Lower leg skin (tissue), 4 donors: ENCODE measurements at regions of chr13 and their contacts with region 1.

Region 1: DNA sequence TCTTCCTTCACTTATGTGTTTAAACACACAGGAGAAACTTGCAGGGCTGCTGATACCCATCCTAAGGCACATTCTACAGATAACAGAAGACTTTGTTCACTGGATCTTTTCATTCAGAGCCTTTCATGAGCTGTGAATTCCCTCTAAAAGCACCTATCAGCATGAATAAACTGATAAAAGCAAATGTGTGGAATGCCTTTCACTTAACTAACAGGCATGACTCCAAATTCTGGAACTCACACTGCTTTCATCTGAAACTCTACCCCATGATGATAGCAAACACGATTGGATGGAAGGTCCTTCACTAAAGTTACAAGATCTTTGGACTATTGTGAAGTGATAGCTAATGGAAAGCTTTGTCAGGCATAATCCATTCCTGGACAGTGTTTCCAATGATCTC is 457.3 kb downstream of the EFNB2 start:
- DNase-seq: no peak
- H3K4me3 ChIP-seq: no peak overlapping the region
- CTCF ChIP-seq: no peak
- POLR2A ChIP-seq: no peak

Region 2: DNA sequence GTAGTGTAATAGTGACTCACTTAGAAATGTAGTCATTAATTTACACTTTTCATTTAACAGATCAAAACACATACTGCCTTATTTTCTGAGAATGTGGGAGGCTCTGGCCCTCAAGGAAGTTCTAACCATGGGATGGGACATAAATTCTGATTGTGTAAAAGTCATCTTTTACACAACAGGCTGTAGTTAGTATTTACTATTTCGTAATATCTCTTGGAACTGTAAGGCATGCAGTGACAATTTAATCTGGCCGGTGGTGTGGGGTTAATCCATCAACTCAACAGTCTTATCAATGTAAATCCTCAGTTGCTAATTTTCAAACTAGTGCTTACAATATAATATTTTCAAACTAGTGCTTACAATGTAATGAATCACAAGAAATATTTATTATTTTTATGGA is 1141.9 kb before region 1 on chr13:
- intact Hi-C with region 1: loop called (anchors 10 kb)
- DNase-seq: no peak
- H3K4me3 ChIP-seq: no peak overlapping the region
- CTCF ChIP-seq: no peak
- POLR2A ChIP-seq: no peak